Calu3 (cell line): ENCODE measurements at regions of chr6 and their contacts with region 1.

Region 1: DNA sequence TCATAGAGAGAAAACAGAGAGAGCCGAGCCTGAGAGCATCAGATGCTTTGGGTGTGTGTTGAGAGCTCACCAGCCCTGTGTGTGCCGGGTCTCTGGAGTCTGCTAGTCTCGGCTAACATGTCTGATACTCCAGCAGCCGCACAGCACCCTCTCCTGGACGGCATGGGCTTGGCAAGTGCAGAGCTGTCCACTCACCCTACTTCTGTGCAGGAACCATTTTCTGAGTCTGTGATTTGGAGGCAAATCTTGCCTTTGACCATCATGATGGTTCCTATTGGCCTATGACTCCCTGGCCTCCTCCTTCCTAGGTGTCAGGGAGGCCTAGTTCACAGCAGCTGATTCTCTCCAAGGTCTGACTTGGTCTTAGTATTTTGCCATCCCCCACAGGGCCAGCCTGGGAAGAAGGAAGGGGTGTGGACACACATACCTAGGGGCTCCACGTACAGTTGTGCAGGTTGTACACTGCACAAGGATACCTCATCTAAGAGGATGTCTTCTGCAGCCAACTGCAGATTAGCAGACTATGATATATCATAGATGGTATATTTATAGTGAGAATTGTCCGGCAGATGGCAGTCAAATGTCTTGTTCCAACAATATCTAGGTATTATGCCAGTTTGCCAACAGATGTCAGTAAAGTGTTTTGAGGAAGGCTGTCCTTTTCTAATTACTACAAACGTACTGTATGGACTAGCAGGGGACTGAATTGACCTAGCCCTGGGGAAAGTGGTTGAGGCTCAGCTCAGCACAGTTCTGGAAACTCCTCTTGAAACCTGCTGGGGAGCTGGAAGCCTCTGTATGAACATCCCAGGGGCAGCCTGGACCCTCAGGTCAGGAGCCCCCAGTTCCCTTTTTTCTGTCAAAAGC is 13.0 kb downstream of the FGD2 start:
- DNase-seq: peak; percentile 95
- H3K4me3 Mint-ChIP-seq: no peak overlapping the region
- H3K27ac Mint-ChIP-seq: peak overlapping the region; percentile 12
- H3K4me1 Mint-ChIP-seq: peaks cover 58% of the 10 kb centered on the region
- H3K27me3 Mint-ChIP-seq: no peaks in the 10 kb centered on the region
- CTCF ChIP-seq: peak; percentile 92

Region 2: DNA sequence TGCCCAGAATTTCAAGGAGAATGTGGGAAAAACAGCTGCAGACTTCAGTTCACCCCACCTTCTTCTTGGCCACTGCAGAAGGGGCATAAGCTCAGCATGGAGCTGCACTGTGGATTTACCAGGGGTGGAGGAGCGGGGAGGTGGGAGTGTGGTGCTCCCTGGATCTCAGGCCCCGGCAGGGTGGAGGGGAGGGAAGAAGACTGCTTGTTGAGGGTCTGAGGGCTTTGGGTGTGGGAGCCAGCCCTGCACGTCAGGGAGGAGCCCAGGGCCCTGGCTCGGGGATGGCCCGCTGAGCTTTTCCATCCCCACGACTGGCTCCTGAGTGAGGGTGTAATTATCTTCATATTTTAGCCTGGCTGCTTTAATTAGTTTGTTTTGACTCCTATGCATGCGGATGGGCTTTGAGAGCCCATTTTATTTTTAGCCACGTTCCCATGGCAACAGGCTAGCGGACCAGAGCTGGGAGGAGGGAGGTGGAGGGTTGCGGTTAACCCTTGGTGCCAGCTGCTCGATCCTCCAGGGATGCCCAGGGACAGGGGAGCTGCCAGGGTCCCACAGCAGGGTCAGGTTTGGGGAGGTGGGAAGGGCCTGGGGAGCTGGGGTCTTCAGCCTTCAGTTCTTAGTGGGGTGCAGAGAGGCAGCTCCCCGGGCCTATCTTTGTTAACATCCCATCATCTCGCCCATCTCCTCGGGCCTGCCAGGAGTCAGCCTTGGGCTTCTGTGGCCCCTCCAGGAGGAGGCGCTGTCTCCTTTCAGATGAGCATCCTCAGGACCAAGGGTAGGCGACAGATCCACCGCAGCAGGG is 252.6 kb before region 1 on chr6:
- CTCF ChIA-PET with region 1: interaction called, 19 read pairs
- intact Hi-C with region 1: loop called (anchors 1 kb)
- DNase-seq: peak; percentile 92
- H3K4me3 Mint-ChIP-seq: no peak overlapping the region
- H3K27ac Mint-ChIP-seq: no peak overlapping the region
- H3K4me1 Mint-ChIP-seq: peaks cover 24% of the 10 kb centered on the region
- H3K27me3 Mint-ChIP-seq: no peaks in the 10 kb centered on the region
- CTCF ChIP-seq: peak; percentile 95

Region 3: DNA sequence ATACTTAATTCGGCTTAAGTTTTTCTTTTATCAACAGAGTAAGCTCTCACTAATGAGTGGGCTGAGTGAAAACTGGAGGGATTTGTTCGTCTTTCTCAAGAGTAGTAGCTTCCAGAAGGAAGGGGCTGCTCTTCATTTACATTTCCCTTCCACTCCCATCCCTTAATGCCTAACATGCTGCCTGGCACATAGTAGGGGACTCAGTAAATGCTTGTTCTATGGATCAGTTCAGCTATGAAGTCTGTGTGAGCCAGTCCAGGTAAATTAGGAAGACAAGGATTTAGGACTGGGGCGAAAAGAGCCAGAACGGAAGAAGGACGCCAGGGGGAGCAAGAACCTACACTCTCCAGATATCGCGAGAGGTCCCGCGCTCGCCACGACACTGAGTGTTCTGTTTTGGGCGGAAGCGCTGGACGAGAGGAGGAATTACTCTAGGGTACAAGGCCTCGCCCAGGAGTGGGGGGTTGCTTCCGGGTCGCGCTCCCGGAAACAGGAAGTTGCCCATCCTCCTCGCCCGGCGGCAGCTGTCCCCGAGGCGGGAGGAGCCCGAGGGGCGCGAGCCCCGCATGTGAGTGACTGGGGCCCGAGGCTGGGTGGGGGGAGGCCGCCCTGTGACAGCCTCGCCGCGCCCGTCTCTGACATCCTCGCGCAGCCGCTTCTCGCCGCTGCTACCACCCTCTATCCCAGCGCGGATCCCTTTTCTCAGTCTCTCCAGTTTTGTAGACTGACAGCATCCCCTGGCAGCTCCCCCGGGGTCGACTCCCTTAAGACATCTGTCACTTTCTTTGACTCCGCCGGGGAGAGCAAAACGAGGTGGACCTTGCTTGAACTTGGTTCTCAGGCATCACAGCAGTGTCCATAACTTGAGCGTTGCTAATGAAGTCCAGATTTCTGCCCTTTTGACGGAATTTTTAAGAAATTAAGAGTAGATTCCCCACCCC is 132.7 kb before region 1 on chr6 and contains the start of gene C6orf89:
- CTCF ChIA-PET with region 1: interaction called, 37 read pairs
- intact Hi-C with region 1: loop called (anchors 1 kb)
- DNase-seq: peak; percentile 96
- H3K4me3 Mint-ChIP-seq: peak within 1 kb of the TSS; percentile 77
- H3K27ac Mint-ChIP-seq: peak within 1 kb of the TSS; percentile 74
- H3K4me1 Mint-ChIP-seq: peaks cover 21% of the 10 kb centered on the region
- H3K27me3 Mint-ChIP-seq: no peaks in the 10 kb centered on the region
- CTCF ChIP-seq: peak; percentile 90
- total RNA-seq, gene C6orf89: 58.3 and 61.1 TPM in 2 replicates

Region 4: GRCh38 chr6:36985808-36986703 is 32.4 kb before region 1 on chr6 and contains the start of gene MTCH1:
- CTCF ChIA-PET with region 1: interaction called, 14 read pairs
- intact Hi-C with region 1: no loop called
- DNase-seq: peak; percentile 95
- H3K4me3 Mint-ChIP-seq: no peak within 1 kb of the TSS
- H3K27ac Mint-ChIP-seq: peak within 1 kb of the TSS; percentile 85
- H3K4me1 Mint-ChIP-seq: peaks cover 28% of the 10 kb centered on the region
- H3K27me3 Mint-ChIP-seq: peaks cover 9% of the 10 kb centered on the region
- CTCF ChIP-seq: no peak
- total RNA-seq, gene MTCH1: 288 and 291 TPM in 2 replicates

Region 5: DNA sequence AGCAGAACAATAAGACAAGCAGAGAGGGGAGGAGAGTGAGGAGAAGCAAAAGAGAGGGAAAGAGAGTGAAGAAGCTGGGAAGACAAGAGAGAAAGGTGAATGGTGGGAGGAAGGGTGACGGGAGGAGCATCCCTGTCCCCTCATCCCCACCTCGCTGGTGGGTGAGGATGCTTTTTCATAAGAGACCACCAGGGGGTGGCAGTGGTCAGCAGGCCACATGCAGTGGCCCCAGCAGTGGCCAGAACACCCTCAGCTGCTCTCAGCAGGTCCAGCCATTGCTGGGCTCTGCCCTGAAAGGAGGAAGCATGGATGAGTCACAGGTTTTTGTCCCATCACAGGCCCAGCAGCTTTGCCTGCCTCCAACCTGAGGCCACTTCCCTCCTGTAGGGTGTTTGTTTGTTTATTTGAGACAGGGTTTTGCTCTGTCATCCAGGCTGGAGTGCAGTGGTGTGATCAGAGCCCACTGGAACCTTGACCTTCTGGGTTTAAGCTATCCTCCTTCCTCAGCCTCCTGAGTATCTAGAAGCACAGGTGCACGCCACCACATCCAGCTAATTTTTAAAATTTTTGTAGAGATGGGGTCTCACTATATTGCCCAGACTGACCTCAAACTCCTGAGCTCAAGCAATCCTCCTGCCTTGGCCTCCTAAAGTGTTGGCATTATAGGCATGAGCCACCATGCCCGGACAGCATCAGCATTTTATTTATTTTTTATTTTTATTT is 11.0 kb after region 1 on chr6:
- CTCF ChIA-PET with region 1: interaction called, 21 read pairs
- intact Hi-C with region 1: no loop called
- DNase-seq: peak; percentile 89
- H3K4me3 Mint-ChIP-seq: no peak overlapping the region
- H3K27ac Mint-ChIP-seq: peak overlapping the region; percentile 11
- H3K4me1 Mint-ChIP-seq: peaks cover 29% of the 10 kb centered on the region
- H3K27me3 Mint-ChIP-seq: no peaks in the 10 kb centered on the region
- CTCF ChIP-seq: peak; percentile 72

Region 6: DNA sequence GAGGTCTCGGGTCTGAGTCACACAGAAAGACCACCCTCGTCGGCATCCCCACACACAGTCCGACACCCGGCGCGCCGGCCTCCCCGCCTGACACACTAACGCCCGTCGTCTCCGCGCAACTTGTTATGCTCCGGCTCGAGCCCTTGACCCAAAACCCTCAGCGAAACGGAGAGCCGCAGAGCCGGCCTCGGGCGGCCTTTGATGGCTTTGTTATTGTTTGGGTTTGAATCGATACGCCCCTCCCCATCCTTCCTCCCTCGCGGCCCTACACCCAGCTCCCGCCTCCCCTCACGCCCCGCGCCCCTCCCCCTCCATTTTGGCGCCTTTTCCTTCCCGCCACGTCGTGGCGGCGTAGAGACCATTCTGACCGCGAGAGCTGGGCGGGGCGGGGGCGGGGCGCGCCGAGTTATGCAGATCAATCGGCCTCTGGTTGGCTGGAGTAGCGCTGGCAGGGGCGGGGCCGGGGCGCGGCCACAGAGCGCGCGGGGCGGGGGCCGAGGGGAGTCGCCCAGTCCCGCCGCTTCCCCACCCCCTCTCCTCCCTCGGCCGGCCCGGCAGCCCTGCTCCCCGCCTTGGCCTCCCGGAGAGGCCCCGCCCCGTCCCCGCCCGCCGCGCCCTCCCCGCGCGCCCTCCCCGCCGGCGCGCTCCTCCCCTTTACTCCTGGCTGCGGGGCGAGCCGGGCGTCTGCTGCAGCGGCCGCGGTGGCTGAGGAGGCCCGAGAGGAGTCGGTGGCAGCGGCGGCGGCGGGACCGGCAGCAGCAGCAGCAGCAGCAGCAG is 151.3 kb after region 1 on chr6 and contains the start of gene PIM1:
- CTCF ChIA-PET with region 1: interaction called, 32 read pairs
- intact Hi-C with region 1: loop called (anchors 1 kb)
- DNase-seq: peak; percentile 99
- H3K4me3 Mint-ChIP-seq: peak within 1 kb of the TSS; percentile 96
- H3K27ac Mint-ChIP-seq: peak within 1 kb of the TSS; percentile 93
- H3K4me1 Mint-ChIP-seq: peaks cover 17% of the 10 kb centered on the region
- H3K27me3 Mint-ChIP-seq: no peaks in the 10 kb centered on the region
- CTCF ChIP-seq: no peak
- total RNA-seq, gene PIM1: 18.6 and 19.1 TPM in 2 replicates